HEK293 (cell line): ENCODE measurements at regions of chrX and their contacts with region 1.

Region 1: GRCh38 chrX:30981968-30982367 is 89.9 kb downstream of the FTHL17 start:
- H3K4me3 ChIP-seq: no peak overlapping the region
- H3K27ac ChIP-seq: no peak overlapping the region
- H3K4me1 ChIP-seq: no peaks in the 10 kb centered on the region
- CTCF ChIP-seq: no peak

Region 2: GRCh38 chrX:30938295-30938694 is 43.7 kb before region 1 on chrX:
- CTCF ChIA-PET with region 1: no interaction called
- POLR2A ChIA-PET with region 1: interaction called, 11 read pairs
- H3K4me3 ChIP-seq: no peak overlapping the region
- H3K27ac ChIP-seq: no peak overlapping the region
- H3K4me1 ChIP-seq: no peaks in the 10 kb centered on the region
- CTCF ChIP-seq: no peak